ENCODE measurements at regions of chr6 and their contacts with region 1.

Region 1: DNA sequence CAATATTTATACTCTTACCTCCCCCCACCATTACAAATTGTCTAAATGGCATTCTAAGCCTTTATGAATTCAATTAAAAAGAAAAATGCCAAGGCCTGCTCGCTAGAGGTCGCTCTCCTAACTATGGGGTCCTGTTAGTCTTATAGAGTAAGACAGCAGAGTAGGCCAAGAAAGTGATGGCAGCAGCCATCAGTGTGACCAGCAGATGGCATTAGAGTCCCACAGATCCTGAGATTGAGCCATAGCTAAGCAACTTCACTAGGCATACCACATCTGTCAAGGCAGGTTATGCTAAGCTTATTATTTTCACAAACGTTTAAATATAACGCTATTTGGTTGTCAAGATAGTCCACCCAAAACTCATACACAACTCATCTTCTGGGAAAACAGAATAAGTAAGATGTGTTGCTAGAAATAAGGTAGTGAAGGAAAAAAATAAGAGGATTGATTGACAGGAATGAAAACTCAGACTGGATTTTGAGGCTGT is 57.6 kb upstream of the SCAF8 start:
- DNase-seq: peak; percentile 95
- ATAC-seq: peak; percentile 99
- H3K4me3 ChIP-seq: no peak overlapping the region
- H3K27ac ChIP-seq: no peak overlapping the region
- H3K4me1 ChIP-seq: peaks cover 5% of the 10 kb centered on the region; the same call in 1 of the 2 replicates
- H3K27me3 ChIP-seq: no peaks in the 10 kb centered on the region
- CTCF ChIP-seq: peak; percentile 98
- EP300 ChIP-seq: no peak
- POLR2A ChIP-seq: no peak
- RAD21 ChIP-seq: peak; percentile 97

Region 2: GRCh38 chr6:154156135-154156896 is 519.3 kb before region 1 on chr6:
- CTCF ChIA-PET with region 1: interaction called, 11 read pairs
- POLR2A ChIA-PET with region 1: no interaction called
- in situ Hi-C with region 1: loop called (anchors 25 kb)
- intact Hi-C with region 1: loop called (anchors 1 kb)
- DNase-seq: peak; percentile 30
- ATAC-seq: peak; percentile 99
- H3K4me3 ChIP-seq: no peak overlapping the region
- H3K27ac ChIP-seq: no peak overlapping the region
- H3K4me1 ChIP-seq: no peaks in the 10 kb centered on the region
- H3K27me3 ChIP-seq: no peaks in the 10 kb centered on the region; a peak in 2 of 5 replicates
- CTCF ChIP-seq: peak; percentile 63
- EP300 ChIP-seq: no peak
- POLR2A ChIP-seq: no peak
- RAD21 ChIP-seq: no peak

Region 3: DNA sequence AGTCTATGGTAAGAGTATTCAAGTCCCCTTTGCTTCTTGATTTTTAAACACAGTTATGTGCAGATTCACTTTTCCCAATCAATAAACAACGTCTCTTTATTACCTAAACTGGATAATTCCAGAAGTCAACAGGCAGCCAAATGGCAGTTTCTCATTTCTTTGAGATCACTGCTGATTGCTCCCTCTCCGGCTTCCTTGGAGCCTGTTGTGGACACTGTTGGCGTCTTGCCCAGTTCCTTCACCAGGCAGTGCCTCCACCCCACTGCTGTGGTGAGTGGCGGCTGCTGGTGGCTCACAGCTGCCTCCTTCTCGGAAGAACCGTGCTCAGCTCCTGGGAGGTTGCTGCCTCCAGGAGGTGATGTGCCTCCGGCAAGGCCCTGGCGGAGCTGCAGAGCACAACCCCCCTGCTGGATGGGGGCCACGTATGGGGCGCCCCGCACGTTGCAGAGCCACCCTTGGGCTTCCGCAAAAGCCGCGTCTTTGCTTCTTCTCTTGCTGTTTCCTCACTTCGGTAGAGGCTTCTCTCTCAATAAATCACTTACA is 60.1 kb before region 1 on chr6:
- CTCF ChIA-PET with region 1: no interaction called
- POLR2A ChIA-PET with region 1: no interaction called
- in situ Hi-C with region 1: no loop called
- intact Hi-C with region 1: no loop called
- DNase-seq: peak; percentile 35
- ATAC-seq: peak; percentile 89
- H3K4me3 ChIP-seq: no peak overlapping the region
- H3K27ac ChIP-seq: no peak overlapping the region
- H3K4me1 ChIP-seq: peaks cover 5% of the 10 kb centered on the region; the same call in 1 of the 2 replicates
- H3K27me3 ChIP-seq: no peaks in the 10 kb centered on the region; a peak in 1 of 5 replicates
- CTCF ChIP-seq: peak; percentile 53
- EP300 ChIP-seq: no peak
- POLR2A ChIP-seq: no peak
- RAD21 ChIP-seq: no peak

Region 4: GRCh38 chr6:154733012-154733625 is 57.5 kb after region 1 on chr6 and contains the start of gene SCAF8:
- CTCF ChIA-PET with region 1: interaction called, 11 read pairs
- POLR2A ChIA-PET with region 1: no interaction called
- in situ Hi-C with region 1: no loop called
- intact Hi-C with region 1: loop called (anchors 1 kb)
- DNase-seq: peak; percentile 73
- ATAC-seq: peak; percentile 85
- H3K4me3 ChIP-seq: peak within 1 kb of the TSS; percentile 75 to 96 (median 81)
- H3K27ac ChIP-seq: peak within 1 kb of the TSS; percentile 99
- H3K4me1 ChIP-seq: peaks cover 48% of the 10 kb centered on the region
- H3K27me3 ChIP-seq: no peaks in the 10 kb centered on the region; a peak in 2 of 5 replicates
- CTCF ChIP-seq: peak; percentile 86
- EP300 ChIP-seq: peak in 1 of 2 experiments; percentile 52; a peak in 3 of 4 replicates
- POLR2A ChIP-seq: peak; percentile 75 to 89
- RAD21 ChIP-seq: peak; percentile 88
- total RNA-seq, gene SCAF8: 40.8 and 47.3 TPM in 2 replicates

Region 5: GRCh38 chr6:154745243-154745642 is 69.6 kb after region 1 on chr6:
- CTCF ChIA-PET with region 1: no interaction called
- POLR2A ChIA-PET with region 1: no interaction called
- in situ Hi-C with region 1: no loop called
- intact Hi-C with region 1: no loop called
- DNase-seq: no peak
- ATAC-seq: no peak
- H3K4me3 ChIP-seq: no peak overlapping the region
- H3K27ac ChIP-seq: no peak overlapping the region
- H3K4me1 ChIP-seq: peaks cover 37% of the 10 kb centered on the region
- H3K27me3 ChIP-seq: no peaks in the 10 kb centered on the region
- CTCF ChIP-seq: no peak
- EP300 ChIP-seq: no peak
- POLR2A ChIP-seq: no peak
- RAD21 ChIP-seq: no peak

Region 6: DNA sequence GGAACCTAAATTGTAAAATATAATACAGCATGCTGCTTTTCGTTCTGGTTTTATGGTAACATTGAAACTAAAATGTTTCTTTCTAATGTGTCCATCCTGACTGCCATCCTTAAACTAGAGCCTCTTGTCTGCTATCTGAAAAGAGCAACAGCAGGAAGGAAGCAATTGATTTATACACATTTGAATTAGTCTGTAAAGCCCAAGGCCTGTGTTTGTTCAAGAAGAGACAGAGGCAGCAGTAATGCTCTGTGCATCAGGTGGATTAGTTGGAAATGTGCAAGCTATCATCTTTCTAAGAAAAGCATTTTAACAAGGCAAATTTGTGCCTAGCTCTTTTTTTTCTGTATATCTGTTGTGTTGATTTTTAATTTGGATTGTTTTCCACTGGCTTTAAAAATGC is 186.2 kb after region 1 on chr6:
- CTCF ChIA-PET with region 1: interaction called, 7 read pairs
- POLR2A ChIA-PET with region 1: no interaction called
- in situ Hi-C with region 1: no loop called
- intact Hi-C with region 1: loop called (anchors 2 kb)
- DNase-seq: no peak
- ATAC-seq: no peak
- H3K4me3 ChIP-seq: no peak overlapping the region
- H3K27ac ChIP-seq: no peak overlapping the region
- H3K4me1 ChIP-seq: peaks cover 18% of the 10 kb centered on the region
- H3K27me3 ChIP-seq: no peaks in the 10 kb centered on the region
- CTCF ChIP-seq: no peak
- EP300 ChIP-seq: no peak
- POLR2A ChIP-seq: no peak
- RAD21 ChIP-seq: no peak

Region 7: DNA sequence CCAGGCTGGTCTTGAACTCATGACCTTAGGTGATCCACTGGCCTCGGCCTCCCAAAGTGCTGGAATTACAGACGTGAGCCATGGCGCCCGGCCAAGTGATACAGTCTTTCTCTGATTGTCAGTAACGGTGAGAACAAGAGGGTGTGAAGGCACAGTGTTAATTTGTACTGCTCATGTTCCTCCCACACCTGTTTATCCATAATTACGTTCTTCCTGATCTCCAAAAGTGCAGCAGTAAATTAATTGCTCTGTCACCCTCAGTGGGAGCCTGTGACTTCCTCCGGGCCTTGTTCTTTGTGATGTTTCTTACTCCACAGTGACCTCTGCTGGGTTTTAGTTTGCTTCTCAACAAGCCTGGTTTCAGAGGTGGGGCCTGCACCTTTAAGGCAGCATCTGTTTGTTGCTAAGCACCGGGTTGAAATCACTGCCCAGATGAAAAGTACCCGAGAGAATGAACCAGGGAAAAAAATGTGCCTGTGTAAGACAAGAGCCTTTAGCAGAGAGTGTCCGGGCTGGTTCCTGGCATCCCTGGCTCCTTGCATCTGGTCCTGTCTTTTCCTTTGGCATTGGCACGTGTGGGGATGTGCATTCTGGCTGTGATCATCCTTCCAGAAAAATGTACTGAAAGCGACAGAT is 499.0 kb after region 1 on chr6:
- CTCF ChIA-PET with region 1: interaction called, 7 read pairs
- POLR2A ChIA-PET with region 1: no interaction called
- in situ Hi-C with region 1: loop called (anchors 10 kb)
- intact Hi-C with region 1: loop called (anchors 1 kb)
- DNase-seq: peak; percentile 82
- ATAC-seq: peak; percentile 96
- H3K4me3 ChIP-seq: no peak overlapping the region
- H3K27ac ChIP-seq: no peak overlapping the region
- H3K4me1 ChIP-seq: peaks cover 7% of the 10 kb centered on the region; the same call in 1 of the 2 replicates
- H3K27me3 ChIP-seq: no peaks in the 10 kb centered on the region
- CTCF ChIP-seq: peak; percentile 90
- EP300 ChIP-seq: no peak
- POLR2A ChIP-seq: no peak
- RAD21 ChIP-seq: peak; percentile 72